ENCODE measurements at regions of chr3 and their contacts with region 1.

Region 1: DNA sequence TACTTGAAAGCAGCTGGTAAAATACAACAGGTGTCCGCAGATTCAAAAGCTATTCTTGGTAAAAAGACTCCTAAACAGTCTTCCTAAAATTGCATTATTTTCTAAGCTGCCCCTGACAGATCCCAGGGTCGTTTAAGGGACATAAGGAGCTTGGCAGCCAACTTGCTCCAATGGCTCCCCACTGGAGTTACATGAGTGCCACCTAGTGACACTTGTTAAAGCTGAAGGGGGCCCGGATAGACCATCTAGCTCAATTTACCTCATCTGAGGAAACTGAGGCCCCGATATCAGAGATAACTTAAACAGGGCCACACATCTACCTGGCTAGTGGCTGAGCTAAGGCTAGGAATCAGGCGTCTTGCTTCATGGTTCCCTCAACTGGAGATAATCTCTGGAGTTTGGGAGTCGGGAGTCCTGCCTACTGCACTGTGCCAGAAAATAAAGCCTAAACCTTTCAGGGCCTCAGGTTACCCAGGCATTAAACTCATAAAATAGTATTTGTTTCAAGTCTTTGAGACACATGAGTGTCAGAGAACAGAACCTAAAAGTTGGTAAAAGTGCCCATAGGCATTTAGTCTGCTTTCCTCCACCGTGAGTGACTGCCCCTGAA is 6.5 kb upstream of the TBC1D23 start:
- DNase-seq: peak; percentile 68
- H3K4me3 Mint-ChIP-seq: no peak overlapping the region
- H3K27ac Mint-ChIP-seq: no peak overlapping the region
- H3K4me1 Mint-ChIP-seq: no peaks in the 10 kb centered on the region
- H3K27me3 Mint-ChIP-seq: no peaks in the 10 kb centered on the region
- CTCF ChIP-seq: peak; percentile 78

Region 2: GRCh38 chr3:99825004-99825640 is 429.2 kb before region 1 on chr3:
- CTCF ChIA-PET with region 1: interaction called, 139 read pairs
- POLR2A ChIA-PET with region 1: interaction called, 3 read pairs
- intact Hi-C with region 1: no loop called
- DNase-seq: no peak
- H3K4me3 Mint-ChIP-seq: peak overlapping the region; percentile 4
- H3K27ac Mint-ChIP-seq: no peak overlapping the region
- H3K4me1 Mint-ChIP-seq: peaks cover 18% of the 10 kb centered on the region
- H3K27me3 Mint-ChIP-seq: no peaks in the 10 kb centered on the region
- CTCF ChIP-seq: no peak

Region 3: GRCh38 chr3:99859825-99860224 is 394.4 kb before region 1 on chr3:
- CTCF ChIA-PET with region 1: interaction called, 16 read pairs
- POLR2A ChIA-PET with region 1: no interaction called
- intact Hi-C with region 1: no loop called
- DNase-seq: peak; percentile 58
- H3K4me3 Mint-ChIP-seq: no peak overlapping the region
- H3K27ac Mint-ChIP-seq: peak overlapping the region; percentile 69
- H3K4me1 Mint-ChIP-seq: peaks cover 35% of the 10 kb centered on the region
- H3K27me3 Mint-ChIP-seq: no peaks in the 10 kb centered on the region
- CTCF ChIP-seq: no peak

Region 4: GRCh38 chr3:100205171-100205570 is 49.1 kb before region 1 on chr3:
- CTCF ChIA-PET with region 1: no interaction called
- POLR2A ChIA-PET with region 1: no interaction called
- intact Hi-C with region 1: no loop called
- DNase-seq: no peak
- H3K4me3 Mint-ChIP-seq: no peak overlapping the region
- H3K27ac Mint-ChIP-seq: no peak overlapping the region
- H3K4me1 Mint-ChIP-seq: no peaks in the 10 kb centered on the region
- H3K27me3 Mint-ChIP-seq: peaks cover 10% of the 10 kb centered on the region
- CTCF ChIP-seq: no peak

Measured in MCF 10A (cell line).